Left ventricle myocardium superior (tissue), 1 donor: ENCODE measurements at regions of chr10 and their contacts with region 1.

Region 1: GRCh38 chr10:47024399-47025252 is 113.4 kb downstream of the PTPN20 start:
- DNase-seq: peak; percentile 75
- ATAC-seq: peak; percentile 80

Region 2: GRCh38 chr10:46556515-46557315 is 467.9 kb before region 1 on chr10 and contains the start of gene GPRIN2:
- intact Hi-C with region 1: no loop called
- DNase-seq: no peak
- ATAC-seq: peak; percentile 30
- total RNA-seq, gene GPRIN2: not detected

Region 3: DNA sequence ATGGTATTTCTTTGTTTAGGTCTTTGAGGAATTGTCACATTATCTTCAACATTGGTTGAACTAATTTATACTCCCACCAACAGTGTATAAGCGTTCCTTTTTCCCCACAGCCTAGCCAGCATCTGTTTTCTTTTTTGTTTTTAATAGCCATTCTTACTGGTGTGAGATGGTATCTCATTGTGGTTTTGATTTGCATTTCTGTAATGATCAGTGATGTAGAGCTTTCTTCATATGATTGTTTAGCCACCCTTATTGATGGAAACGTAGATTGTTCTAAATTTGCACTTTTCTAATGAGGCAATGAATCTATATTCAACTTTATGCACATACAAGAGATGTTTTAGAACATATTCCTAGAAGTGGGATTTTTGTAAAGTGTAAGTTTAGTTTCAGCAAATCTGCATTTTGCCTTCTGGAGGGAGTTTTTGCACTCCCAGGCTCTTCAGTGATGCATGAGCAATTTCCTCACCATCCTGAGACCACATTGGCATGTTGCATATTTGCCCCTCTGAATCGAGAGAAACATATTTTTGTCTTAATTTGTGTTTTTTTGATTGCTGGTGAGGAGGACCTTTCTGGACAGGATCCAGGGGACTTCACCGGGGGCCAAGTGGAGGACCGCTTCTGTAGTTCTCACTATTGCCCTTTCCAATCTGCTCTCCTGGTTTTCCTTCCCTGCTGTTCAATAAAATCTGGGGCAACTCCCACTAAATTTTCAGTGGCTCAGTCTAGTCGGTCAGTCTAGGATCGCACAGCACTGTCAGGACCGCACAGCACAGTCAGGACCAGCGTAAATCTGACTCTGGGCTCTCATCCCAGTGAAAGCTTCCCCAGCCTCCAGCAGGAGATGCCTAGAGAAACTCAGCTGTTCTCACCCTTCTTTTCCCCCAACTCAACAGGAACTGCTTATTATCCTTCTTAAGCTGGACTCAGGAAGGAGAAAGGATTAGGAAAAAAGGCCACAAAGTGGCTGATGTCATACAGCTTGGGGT is 43.6 kb after region 1 on chr10:
- intact Hi-C with region 1: no loop called
- DNase-seq: no peak
- ATAC-seq: no peak

Region 4: DNA sequence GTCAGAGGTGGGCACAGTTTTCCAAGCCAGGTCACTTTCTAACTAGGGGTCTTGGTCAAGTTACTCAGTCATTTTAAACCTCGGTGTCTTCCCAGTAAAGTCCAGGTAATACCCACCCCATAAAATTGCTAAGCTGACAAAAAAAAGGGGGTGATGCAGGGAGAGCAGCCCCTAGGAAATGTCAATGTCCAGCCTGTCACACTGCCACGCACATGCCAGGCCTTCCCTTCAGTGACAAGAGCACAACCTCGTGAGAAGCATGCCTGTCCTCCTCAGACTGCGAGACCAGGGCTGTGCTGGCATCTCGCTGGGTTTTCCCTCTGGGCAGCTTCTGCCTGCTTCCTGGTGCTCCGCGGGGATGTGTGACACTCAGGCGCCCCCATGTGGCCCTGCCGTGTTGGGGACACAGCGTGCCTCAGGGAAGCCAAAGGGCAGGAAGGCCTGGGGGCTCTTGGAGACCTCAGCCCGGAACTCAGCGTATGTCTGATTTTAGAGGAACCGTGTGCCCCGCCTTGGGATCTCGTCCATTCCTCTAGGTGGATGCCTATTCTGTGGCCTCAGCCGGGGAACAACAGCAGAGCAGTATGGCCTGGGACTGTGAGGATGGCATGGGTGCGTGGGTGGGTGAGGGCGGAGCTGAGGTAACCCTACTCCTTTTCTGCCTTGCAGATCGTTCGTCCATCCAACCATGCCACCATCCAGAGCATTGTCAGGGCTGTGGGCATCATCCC is 287.5 kb after region 1 on chr10:
- intact Hi-C with region 1: loop called (anchors 10 kb)
- DNase-seq: peak; percentile 91
- ATAC-seq: peak; percentile 98